T-cell (primary cell): ENCODE measurements at regions of chr14 and their contacts with region 1.

Region 1: DNA sequence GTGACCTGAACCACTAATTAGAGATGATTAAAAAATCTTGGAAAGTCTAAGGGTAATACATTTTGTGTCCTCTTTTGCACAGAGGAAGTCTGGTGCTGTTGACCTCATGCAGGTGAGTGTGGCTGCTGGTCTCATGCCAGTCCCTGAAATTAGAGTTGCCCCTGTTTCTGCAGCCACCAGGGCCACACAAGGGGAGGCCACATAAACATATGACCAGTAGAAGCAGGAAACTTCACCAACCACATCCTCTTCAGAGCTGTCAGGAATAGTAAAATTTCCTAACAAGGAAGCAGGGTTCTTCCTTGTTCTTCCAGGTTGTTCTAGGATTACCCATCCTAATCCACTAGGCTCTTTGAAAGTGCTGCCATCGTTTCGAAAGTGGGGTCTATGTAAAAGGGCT is 28.3 kb downstream of the PSMA6 start:
- DNase-seq: no peak
- ATAC-seq: no peak
- H3K4me3 ChIP-seq: no peak overlapping the region
- H3K4me3 Mint-ChIP-seq: no peak overlapping the region
- H3K27ac ChIP-seq: no peak overlapping the region
- H3K27ac Mint-ChIP-seq: no peak overlapping the region
- H3K4me1 ChIP-seq: peaks cover 0 to 4% of the 10 kb centered on the region in 2 experiments
- H3K4me1 Mint-ChIP-seq: peaks cover 0 to 2% (median 2%) of the 10 kb centered on the region in 3 donors
- H3K27me3 ChIP-seq: no peaks in the 10 kb centered on the region
- H3K27me3 Mint-ChIP-seq: no peaks in the 10 kb centered on the region

Region 2: GRCh38 chr14:34781242-34781641 is 539.2 kb before region 1 on chr14:
- CTCF ChIA-PET with region 1: no interaction called
- POLR2A ChIA-PET with region 1: interaction called in 1 of 2 experiments, 11 read pairs
- DNase-seq: no peak
- ATAC-seq: no peak
- H3K4me3 ChIP-seq: no peak overlapping the region
- H3K4me3 Mint-ChIP-seq: no peak overlapping the region
- H3K27ac ChIP-seq: no peak overlapping the region
- H3K27ac Mint-ChIP-seq: peak overlapping the region in 1 of 2 donors; percentile 57
- H3K4me1 ChIP-seq: no peaks in the 10 kb centered on the region
- H3K4me1 Mint-ChIP-seq: peaks cover 1 to 11% (median 10%) of the 10 kb centered on the region in 3 donors
- H3K27me3 ChIP-seq: no peaks in the 10 kb centered on the region
- H3K27me3 Mint-ChIP-seq: no peaks in the 10 kb centered on the region

Region 3: GRCh38 chr14:35252451-35252868 is 68.0 kb before region 1 on chr14:
- CTCF ChIA-PET with region 1: no interaction called
- POLR2A ChIA-PET with region 1: no interaction called
- DNase-seq: no peak
- ATAC-seq: no peak
- H3K4me3 ChIP-seq: no peak overlapping the region
- H3K4me3 Mint-ChIP-seq: no peak overlapping the region
- H3K27ac ChIP-seq: no peak overlapping the region
- H3K27ac Mint-ChIP-seq: no peak overlapping the region
- H3K4me1 ChIP-seq: no peaks in the 10 kb centered on the region
- H3K4me1 Mint-ChIP-seq: peaks cover 14 to 20% (median 16%) of the 10 kb centered on the region in 3 donors
- H3K27me3 ChIP-seq: no peaks in the 10 kb centered on the region
- H3K27me3 Mint-ChIP-seq: no peaks in the 10 kb centered on the region

Region 4: DNA sequence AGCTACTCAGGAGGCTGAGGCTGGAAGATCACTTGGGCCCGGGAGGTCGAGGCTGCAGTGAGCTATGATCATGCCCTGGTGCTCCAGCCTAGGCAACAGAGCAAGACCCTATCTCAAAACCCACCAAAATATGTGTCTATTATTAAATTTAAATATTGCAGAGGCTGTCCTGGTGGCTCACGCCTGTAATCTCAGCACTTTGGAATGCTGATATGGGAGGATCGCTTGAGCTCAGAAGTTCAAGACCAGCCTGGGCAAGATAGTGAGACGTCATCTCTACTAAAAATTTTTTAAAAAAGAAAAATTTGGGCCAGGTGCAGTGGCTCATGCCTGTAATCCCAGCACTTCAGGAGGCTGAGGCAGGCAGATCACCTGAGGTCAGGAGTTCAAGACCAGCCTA is 14.4 kb before region 1 on chr14:
- CTCF ChIA-PET with region 1: no interaction called
- POLR2A ChIA-PET with region 1: no interaction called
- DNase-seq: no peak
- ATAC-seq: no peak
- H3K4me3 ChIP-seq: no peak overlapping the region
- H3K4me3 Mint-ChIP-seq: no peak overlapping the region
- H3K27ac ChIP-seq: no peak overlapping the region
- H3K27ac Mint-ChIP-seq: no peak overlapping the region
- H3K4me1 ChIP-seq: peaks cover 13 to 31% of the 10 kb centered on the region in 2 experiments
- H3K4me1 Mint-ChIP-seq: peaks cover 31 to 38% (median 33%) of the 10 kb centered on the region in 3 donors
- H3K27me3 ChIP-seq: no peaks in the 10 kb centered on the region
- H3K27me3 Mint-ChIP-seq: no peaks in the 10 kb centered on the region